Endothelial cell of umbilical vein (primary cell): ENCODE measurements at regions of chr3 and their contacts with region 1.

Region 1: GRCh38 chr3:132220986-132221385 is 96.2 kb upstream of the ACP3 start:
- DNase-seq: no peak
- H3K4me3 ChIP-seq: no peak overlapping the region
- H3K27ac ChIP-seq: no peak overlapping the region
- H3K4me1 ChIP-seq: no peaks in the 10 kb centered on the region
- H3K27me3 ChIP-seq: peaks cover 0 to 3% of the 10 kb centered on the region in 2 experiments
- CTCF ChIP-seq: no peak
- POLR2A ChIP-seq: no peak

Region 2: GRCh38 chr3:132210476-132211346 is 10.3 kb before region 1 on chr3:
- CTCF ChIA-PET with region 1: interaction called, 16 read pairs
- POLR2A ChIA-PET with region 1: no interaction called
- dilution Hi-C with region 1: no loop called
- intact Hi-C with region 1: no loop called
- DNase-seq: peak; percentile 9
- H3K4me3 ChIP-seq: no peak overlapping the region
- H3K27ac ChIP-seq: no peak overlapping the region
- H3K4me1 ChIP-seq: no peaks in the 10 kb centered on the region
- H3K27me3 ChIP-seq: peaks cover 4 to 8% of the 10 kb centered on the region in 2 experiments
- CTCF ChIP-seq: peak; percentile 50 to 53
- POLR2A ChIP-seq: no peak